ENCODE measurements at regions of chr19 and their contacts with region 1.

Region 1: GRCh38 chr19:14347999-14348889 is 33.0 kb upstream of the ADGRE5 start:
- DNase-seq: peak; percentile 61
- H3K4me3 Mint-ChIP-seq: peak overlapping the region; percentile 58
- H3K27ac Mint-ChIP-seq: peak overlapping the region; percentile 47
- H3K4me1 Mint-ChIP-seq: peaks cover 18% of the 10 kb centered on the region
- H3K27me3 Mint-ChIP-seq: peaks cover 5% of the 10 kb centered on the region

Region 2: GRCh38 chr19:13962699-13963602 is 385.3 kb before region 1 on chr19:
- intact Hi-C with region 1: no loop called
- DNase-seq: no peak
- H3K4me3 Mint-ChIP-seq: no peak overlapping the region
- H3K27ac Mint-ChIP-seq: no peak overlapping the region
- H3K4me1 Mint-ChIP-seq: no peaks in the 10 kb centered on the region
- H3K27me3 Mint-ChIP-seq: no peaks in the 10 kb centered on the region

Region 3: GRCh38 chr19:14198384-14199376 is 149.6 kb before region 1 on chr19:
- intact Hi-C with region 1: loop called (anchors 1 kb)
- DNase-seq: no peak
- H3K4me3 Mint-ChIP-seq: no peak overlapping the region
- H3K27ac Mint-ChIP-seq: no peak overlapping the region
- H3K4me1 Mint-ChIP-seq: peaks cover 31% of the 10 kb centered on the region
- H3K27me3 Mint-ChIP-seq: peaks cover 12% of the 10 kb centered on the region

Region 4: GRCh38 chr19:14218620-14219330 is 129.5 kb before region 1 on chr19:
- intact Hi-C with region 1: loop called (anchors 5 kb)
- DNase-seq: no peak
- H3K4me3 Mint-ChIP-seq: no peak overlapping the region
- H3K27ac Mint-ChIP-seq: peak overlapping the region; percentile 65
- H3K4me1 Mint-ChIP-seq: peaks cover 6% of the 10 kb centered on the region
- H3K27me3 Mint-ChIP-seq: peaks cover 6% of the 10 kb centered on the region

Region 5: GRCh38 chr19:14366498-14366915 is 18.3 kb after region 1 on chr19:
- intact Hi-C with region 1: loop called (anchors 2 kb)
- DNase-seq: peak; percentile 86
- H3K4me3 Mint-ChIP-seq: peak overlapping the region; percentile 74
- H3K27ac Mint-ChIP-seq: peak overlapping the region; percentile 97
- H3K4me1 Mint-ChIP-seq: peaks cover 80% of the 10 kb centered on the region
- H3K27me3 Mint-ChIP-seq: no peaks in the 10 kb centered on the region

Region 6: DNA sequence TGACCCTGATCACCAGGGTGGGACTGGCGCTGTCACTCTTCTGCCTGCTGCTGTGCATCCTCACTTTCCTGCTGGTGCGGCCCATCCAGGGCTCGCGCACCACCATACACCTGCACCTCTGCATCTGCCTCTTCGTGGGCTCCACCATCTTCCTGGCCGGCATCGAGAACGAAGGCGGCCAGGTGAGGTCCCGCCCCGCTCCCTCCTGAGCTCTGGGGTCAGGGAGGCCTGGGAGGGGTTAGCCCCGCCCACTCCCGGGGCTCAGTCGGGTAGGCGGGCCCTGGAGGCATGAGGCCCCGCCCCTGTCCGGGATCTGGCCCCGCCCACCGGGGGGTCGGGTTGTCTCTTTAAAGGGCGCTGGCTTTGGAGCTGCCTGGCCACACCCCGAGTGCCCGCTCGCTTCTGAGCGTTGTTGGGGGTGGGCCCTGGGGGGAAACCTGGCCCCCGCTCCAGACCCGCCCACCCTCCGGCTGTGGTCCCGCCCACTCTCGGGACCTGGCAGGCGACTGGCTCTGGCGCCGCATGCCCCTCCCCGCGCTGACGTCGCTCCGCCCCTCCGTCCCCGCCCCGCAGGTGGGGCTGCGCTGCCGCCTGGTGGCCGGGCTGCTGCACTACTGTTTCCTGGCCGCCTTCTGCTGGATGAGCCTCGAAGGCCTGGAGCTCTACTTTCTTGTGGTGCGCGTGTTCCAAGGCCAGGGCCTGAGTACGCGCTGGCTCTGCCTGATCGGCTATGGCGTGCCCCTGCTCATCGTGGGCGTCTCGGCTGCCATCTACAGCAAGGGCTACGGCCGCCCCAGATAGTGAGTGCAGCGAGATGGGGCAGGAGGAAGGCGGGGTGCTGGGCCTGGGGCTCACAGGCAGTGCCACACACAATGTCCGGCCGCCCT is 57.8 kb after region 1 on chr19:
- intact Hi-C with region 1: loop called (anchors 1 kb)
- DNase-seq: peak; percentile 85
- H3K4me3 Mint-ChIP-seq: no peak overlapping the region
- H3K27ac Mint-ChIP-seq: peak overlapping the region; percentile 65
- H3K4me1 Mint-ChIP-seq: no peaks in the 10 kb centered on the region
- H3K27me3 Mint-ChIP-seq: no peaks in the 10 kb centered on the region

Region 7: DNA sequence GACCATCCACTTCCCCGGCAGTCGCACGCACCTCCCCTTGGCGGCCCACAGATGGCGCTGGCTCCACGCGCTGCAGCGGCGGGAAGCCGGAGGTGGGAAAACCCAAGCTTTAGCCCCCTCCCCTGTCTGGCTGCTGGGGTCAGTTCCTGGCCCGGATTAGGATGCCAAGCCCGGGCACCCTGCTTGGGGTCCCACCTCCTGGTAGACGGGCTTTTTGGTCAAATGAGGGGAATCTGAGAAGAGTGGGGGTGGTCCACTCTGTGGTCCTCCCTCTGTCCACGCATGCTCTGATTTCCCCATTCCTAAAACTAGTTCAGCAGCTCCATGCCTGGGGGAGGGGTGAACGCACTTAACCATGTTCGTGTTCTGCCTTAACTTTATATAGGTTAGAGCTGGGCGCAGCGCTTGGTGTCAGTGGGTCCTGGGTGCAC is 438.2 kb after region 1 on chr19:
- intact Hi-C with region 1: no loop called
- DNase-seq: no peak
- H3K4me3 Mint-ChIP-seq: no peak overlapping the region
- H3K27ac Mint-ChIP-seq: no peak overlapping the region
- H3K4me1 Mint-ChIP-seq: peaks cover 10% of the 10 kb centered on the region
- H3K27me3 Mint-ChIP-seq: no peaks in the 10 kb centered on the region

Measured in activated T-helper 1 cell treated with anti-CD3 and anti-CD28 coated beads, Interleukin-12 subunit alpha, Interleukin-12 subunit beta, Interleukin-2, Interleukin-4 antibody, amounts not matched to agents 30 ng/mL and 10 ng/mL and 1 ng/mL, durations not matched to agents 14 hours and 24 hours and 36 hours (primary cell).